CD4-positive, alpha-beta memory T cell (primary cell): ENCODE measurements at regions of chr16 and their contacts with region 1.

Region 1: DNA sequence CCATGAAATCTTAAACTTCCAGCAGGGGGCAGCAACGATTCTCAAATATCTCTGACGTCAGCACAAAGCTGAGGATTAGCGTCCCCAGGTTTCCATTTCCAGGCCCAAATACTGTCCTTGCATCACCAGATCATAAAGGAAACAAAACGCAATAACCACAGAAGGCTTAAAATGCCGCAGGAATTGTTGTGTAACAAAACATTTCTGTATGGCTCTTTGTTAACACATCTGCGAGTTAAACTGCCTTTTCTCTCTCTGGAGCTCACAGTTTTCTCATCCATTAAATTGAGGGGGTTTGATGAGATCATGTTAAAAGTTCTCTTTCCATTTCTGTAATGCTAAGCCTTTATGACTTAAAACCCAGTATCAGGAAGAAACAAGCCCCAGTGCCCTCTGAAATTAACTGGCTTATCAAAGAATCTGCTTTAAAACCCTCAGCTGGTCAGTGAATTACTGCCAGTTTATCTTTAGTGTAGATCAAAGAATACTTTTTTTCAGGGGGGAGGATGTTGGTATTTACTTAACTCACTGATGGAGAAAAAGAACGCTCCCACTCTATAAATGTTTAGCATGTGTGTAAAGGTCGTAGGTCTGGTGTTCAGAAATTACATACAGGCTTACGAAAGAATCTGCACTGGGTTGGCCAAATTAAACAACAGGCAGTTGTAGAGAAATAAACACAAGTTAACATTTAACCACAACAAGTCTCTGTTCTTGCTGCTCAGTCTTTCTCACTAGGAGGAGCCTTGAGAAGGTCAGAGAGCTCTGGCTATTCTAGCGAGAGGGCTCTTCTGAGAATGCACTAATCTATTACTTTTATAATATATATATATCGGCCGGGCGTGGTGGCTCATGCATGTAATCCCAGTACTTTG is 10.6 kb upstream of the TERF2 start:
- DNase-seq: peak; percentile 65 to 76 (median 68)
- H3K4me3 ChIP-seq: no peak overlapping the region
- H3K4me3 Mint-ChIP-seq: peak overlapping the region in 1 of 8 donors; percentile 27
- H3K27ac ChIP-seq: peak overlapping the region; percentile 31
- H3K27ac Mint-ChIP-seq: peak overlapping the region in 6 of 7 donors; percentile 6 to 81 (median 24)
- H3K4me1 ChIP-seq: peaks cover 4% of the 10 kb centered on the region
- H3K4me1 Mint-ChIP-seq: peaks cover 0 to 6% (median 5%) of the 10 kb centered on the region in 4 donors
- H3K27me3 ChIP-seq: no peaks in the 10 kb centered on the region
- H3K27me3 Mint-ChIP-seq: peaks cover 0 to 3% of the 10 kb centered on the region in 2 donors

Region 2: DNA sequence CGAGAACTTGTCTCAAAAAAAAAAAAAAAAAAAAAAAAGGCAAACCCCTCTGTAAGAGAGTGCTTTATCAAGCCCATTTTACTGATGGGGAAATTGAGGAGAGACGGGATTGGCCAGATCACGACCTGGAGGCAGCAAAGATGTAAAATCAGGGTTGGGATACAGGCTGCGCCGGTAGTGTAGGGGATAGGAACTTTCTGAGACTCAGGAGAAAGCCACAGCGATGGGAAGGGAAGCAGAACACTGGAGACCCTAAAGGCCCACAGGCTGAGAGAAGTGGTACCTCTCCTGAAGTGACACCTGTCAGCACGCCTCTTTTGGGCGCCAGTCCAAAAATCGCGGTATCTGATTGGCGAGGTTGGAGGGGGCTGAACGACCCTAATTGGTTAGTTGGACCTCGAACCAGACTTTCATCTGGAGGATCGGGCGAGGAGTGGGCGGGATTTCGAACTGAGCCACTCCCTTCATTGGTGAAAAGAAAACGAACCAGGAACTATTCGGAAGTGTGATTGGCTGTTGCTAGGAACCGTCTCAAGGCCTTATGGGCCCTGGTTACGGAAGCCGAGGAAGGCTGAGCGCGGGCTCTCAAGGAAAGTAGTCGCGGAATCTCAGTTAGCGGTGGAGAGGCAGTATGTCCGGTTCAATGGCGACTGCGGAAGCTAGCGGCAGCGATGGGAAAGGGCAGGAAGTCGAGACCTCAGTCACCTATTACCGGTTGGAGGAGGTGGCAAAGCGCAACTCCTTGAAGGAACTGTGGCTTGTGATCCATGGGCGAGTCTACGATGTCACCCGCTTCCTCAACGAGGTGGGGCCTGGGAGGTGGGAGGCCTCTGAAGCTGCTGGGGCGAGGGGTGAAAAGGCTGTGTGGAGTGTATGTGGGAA is 27.9 kb after region 1 on chr16 and contains the start of gene CYB5B:
- CTCF ChIA-PET with region 1: interaction called, 10 read pairs
- POLR2A ChIA-PET with region 1: no interaction called
- intact Hi-C with region 1: loop called (anchors 1 kb)
- DNase-seq: peak; percentile 95 to 99 (median 97)
- H3K4me3 ChIP-seq: peak within 1 kb of the TSS; percentile 84 to 90
- H3K4me3 Mint-ChIP-seq: peak within 1 kb of the TSS; percentile 93 to 98 (median 96)
- H3K27ac ChIP-seq: peak within 1 kb of the TSS; percentile 71
- H3K27ac Mint-ChIP-seq: peak within 1 kb of the TSS; percentile 85 to 99 (median 96)
- H3K4me1 ChIP-seq: peaks cover 19% of the 10 kb centered on the region
- H3K4me1 Mint-ChIP-seq: peaks cover 23 to 45% (median 26%) of the 10 kb centered on the region in 4 donors
- H3K27me3 ChIP-seq: no peaks in the 10 kb centered on the region
- H3K27me3 Mint-ChIP-seq: no peaks in the 10 kb centered on the region
- total RNA-seq, gene CYB5B: 59.2 to 64.4 TPM

Region 3: GRCh38 chr16:69465083-69465721 is 68.8 kb after region 1 on chr16:
- CTCF ChIA-PET with region 1: interaction called, 36 read pairs
- POLR2A ChIA-PET with region 1: interaction called, 4 read pairs
- intact Hi-C with region 1: loop called (anchors 1 kb)
- DNase-seq: peak in 4 of 5 donors; percentile 6 to 44 (median 16)
- H3K4me3 ChIP-seq: no peak overlapping the region
- H3K4me3 Mint-ChIP-seq: peak overlapping the region in 7 of 8 donors; percentile 53 to 80 (median 69)
- H3K27ac ChIP-seq: peak overlapping the region; percentile 7
- H3K27ac Mint-ChIP-seq: peak overlapping the region; percentile 77 to 93 (median 85)
- H3K4me1 ChIP-seq: peaks cover 33% of the 10 kb centered on the region
- H3K4me1 Mint-ChIP-seq: peaks cover 32 to 59% (median 49%) of the 10 kb centered on the region in 4 donors
- H3K27me3 ChIP-seq: no peaks in the 10 kb centered on the region
- H3K27me3 Mint-ChIP-seq: no peaks in the 10 kb centered on the region

Region 4: GRCh38 chr16:69709456-69710084 is 313.1 kb after region 1 on chr16:
- CTCF ChIA-PET with region 1: interaction called, 8 read pairs
- POLR2A ChIA-PET with region 1: no interaction called
- intact Hi-C with region 1: loop called (anchors 5 kb)
- DNase-seq: peak in 4 of 5 donors; percentile 49 to 60 (median 58)
- H3K4me3 ChIP-seq: no peak overlapping the region
- H3K4me3 Mint-ChIP-seq: no peak overlapping the region
- H3K27ac ChIP-seq: no peak overlapping the region
- H3K27ac Mint-ChIP-seq: peak overlapping the region in 6 of 7 donors; percentile 0 to 70 (median 38)
- H3K4me1 ChIP-seq: peaks cover 6% of the 10 kb centered on the region
- H3K4me1 Mint-ChIP-seq: peaks cover 0 to 4% (median 2%) of the 10 kb centered on the region in 4 donors
- H3K27me3 ChIP-seq: no peaks in the 10 kb centered on the region
- H3K27me3 Mint-ChIP-seq: no peaks in the 10 kb centered on the region

Region 5: DNA sequence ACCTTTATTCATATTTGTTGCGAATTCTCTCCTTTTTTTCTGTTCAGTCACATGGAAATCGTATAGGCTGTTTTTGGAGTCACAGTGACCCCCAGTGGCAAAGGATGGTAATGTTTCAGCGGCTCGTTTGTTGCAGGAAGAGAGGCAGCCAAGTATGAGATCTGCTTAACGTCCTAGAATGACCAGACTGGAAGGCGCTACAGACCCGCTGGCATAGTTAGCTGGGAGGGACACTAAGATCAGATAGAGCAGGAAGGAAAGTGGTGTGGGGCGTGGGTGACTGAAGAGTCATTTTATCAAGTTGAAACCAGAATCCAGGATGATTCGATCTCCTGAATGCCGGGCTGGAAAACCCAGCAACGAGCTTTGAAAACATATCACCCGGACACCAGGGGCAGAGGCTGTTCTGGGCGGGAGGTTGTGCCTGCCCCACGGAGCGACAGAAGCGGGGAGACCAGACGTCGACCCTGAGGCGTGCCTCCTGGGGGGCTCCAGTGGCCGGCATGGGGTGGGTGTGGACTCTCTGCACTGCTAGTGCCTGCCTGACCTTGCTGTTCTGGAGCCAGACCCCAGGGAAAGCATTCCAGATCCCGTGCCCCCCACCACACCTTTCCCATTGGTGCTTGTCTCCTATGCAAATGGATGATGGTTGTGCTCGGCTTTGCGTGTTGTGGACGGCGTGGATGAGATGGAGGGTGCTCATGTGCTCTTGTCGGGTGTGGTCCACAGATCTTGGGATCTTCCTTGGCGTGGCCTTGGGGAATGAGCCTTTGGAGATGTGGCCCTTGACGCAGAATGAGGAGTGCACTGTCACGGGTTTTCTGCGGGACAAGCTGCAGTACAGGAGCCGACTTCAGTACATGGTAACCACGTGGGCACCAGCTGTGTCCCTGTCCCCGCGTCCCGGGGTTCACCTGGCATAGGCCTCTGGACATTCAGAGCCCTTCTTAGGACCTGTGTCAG is 1257.7 kb after region 1 on chr16:
- CTCF ChIA-PET with region 1: no interaction called
- POLR2A ChIA-PET with region 1: no interaction called
- intact Hi-C with region 1: loop called (anchors 5 kb)
- DNase-seq: peak; percentile 66 to 81 (median 73)
- H3K4me3 ChIP-seq: no peak overlapping the region
- H3K4me3 Mint-ChIP-seq: peak overlapping the region in 4 of 8 donors; percentile 47 to 80 (median 68)
- H3K27ac ChIP-seq: no peak overlapping the region
- H3K27ac Mint-ChIP-seq: peak overlapping the region in 3 of 7 donors; percentile 14 to 84 (median 58)
- H3K4me1 ChIP-seq: no peaks in the 10 kb centered on the region
- H3K4me1 Mint-ChIP-seq: peaks cover 0 to 5% (median 4%) of the 10 kb centered on the region in 4 donors
- H3K27me3 ChIP-seq: no peaks in the 10 kb centered on the region
- H3K27me3 Mint-ChIP-seq: peaks cover 0 to 1% of the 10 kb centered on the region in 2 donors